ENCODE measurements at regions of chr21 and their contacts with region 1.

Region 1: DNA sequence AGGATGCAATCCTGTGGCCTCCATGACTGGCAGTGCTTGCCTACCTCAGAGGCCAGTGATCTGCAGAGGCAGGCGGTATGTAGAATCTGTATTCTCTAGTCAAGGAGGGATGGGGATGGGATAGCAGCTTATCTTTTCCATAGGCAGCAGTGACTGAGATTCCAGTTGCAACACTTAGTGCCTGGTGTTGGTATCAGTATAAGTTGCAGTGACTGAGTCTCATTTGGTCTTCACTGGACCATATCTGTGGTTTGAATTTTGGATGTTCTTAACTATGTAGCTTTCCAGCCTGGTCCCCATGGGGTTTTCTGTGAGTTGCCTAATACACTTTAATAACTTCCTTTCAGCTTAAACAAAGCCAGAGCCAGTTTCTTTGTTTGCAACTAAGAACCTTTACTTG is 16.5 kb downstream of the DYRK1A start:
- DNase-seq: no peak
- H3K4me3 ChIP-seq: no peak overlapping the region
- H3K27ac ChIP-seq: no peak overlapping the region
- H3K27me3 ChIP-seq: no peaks in the 10 kb centered on the region
- CTCF ChIP-seq: no peak

Region 2: GRCh38 chr21:37398697-37399096 is 15.6 kb after region 1 on chr21:
- CTCF ChIA-PET with region 1: no interaction called
- POLR2A ChIA-PET with region 1: interaction called, 11 read pairs
- DNase-seq: no peak
- H3K4me3 ChIP-seq: no peak overlapping the region
- H3K27ac ChIP-seq: no peak overlapping the region
- H3K27me3 ChIP-seq: no peaks in the 10 kb centered on the region
- CTCF ChIP-seq: no peak

Measured in AG04450 (cell line).